Stomach (tissue), 19 donors: ENCODE measurements at regions of chr1 and their contacts with region 1.

Region 1: GRCh38 chr1:205668951-205669340 is 11.4 kb downstream of the SLC45A3 start:
- DNase-seq: peak in 1 of 2 donors; percentile 62
- H3K4me3 ChIP-seq: no peak overlapping the region
- H3K27ac ChIP-seq: peak overlapping the region; percentile 28 to 87 (median 60)
- H3K4me1 ChIP-seq: peaks cover 32 to 90% (median 50%) of the 10 kb centered on the region in 4 donors
- H3K27me3 ChIP-seq: peaks cover 0 to 26% (median 0%) of the 10 kb centered on the region in 3 donors
- CTCF ChIP-seq: no peak
- EP300 ChIP-seq: no peak
- POLR2A ChIP-seq: no peak

Region 2: GRCh38 chr1:205711104-205712020 is 42.4 kb after region 1 on chr1:
- intact Hi-C with region 1: loop called (anchors 10 kb)
- DNase-seq: peak; percentile 71 to 94
- H3K4me3 ChIP-seq: no peak overlapping the region
- H3K27ac ChIP-seq: peak overlapping the region in 3 of 5 donors; percentile 34 to 54 (median 45)
- H3K4me1 ChIP-seq: peaks cover 9 to 81% (median 43%) of the 10 kb centered on the region in 4 donors
- H3K27me3 ChIP-seq: no peaks in the 10 kb centered on the region
- CTCF ChIP-seq: peak in 5 of 7 experiments; percentile 70 to 89 (median 85)
- EP300 ChIP-seq: no peak
- POLR2A ChIP-seq: no peak

Region 3: GRCh38 chr1:206967096-206967849 is 1298.3 kb after region 1 on chr1:
- intact Hi-C with region 1: no loop called
- DNase-seq: peak in 1 of 2 donors; percentile 44
- H3K4me3 ChIP-seq: no peak overlapping the region
- H3K27ac ChIP-seq: no peak overlapping the region
- H3K4me1 ChIP-seq: peaks cover 4 to 31% (median 10%) of the 10 kb centered on the region in 4 donors
- H3K27me3 ChIP-seq: peaks cover 0 to 15% (median 0%) of the 10 kb centered on the region in 3 donors
- CTCF ChIP-seq: no peak
- EP300 ChIP-seq: no peak
- POLR2A ChIP-seq: no peak